ENCODE measurements at regions of chr1 and their contacts with region 1.

Region 1: GRCh38 chr1:219324629-219325367 is 151.1 kb downstream of the LYPLAL1 start:
- DNase-seq: no peak
- H3K4me3 Mint-ChIP-seq: no peak overlapping the region
- H3K27ac Mint-ChIP-seq: no peak overlapping the region
- H3K4me1 Mint-ChIP-seq: peaks cover 10% of the 10 kb centered on the region
- H3K27me3 Mint-ChIP-seq: peaks cover 38% of the 10 kb centered on the region

Region 2: GRCh38 chr1:219189021-219189824 is 135.6 kb before region 1 on chr1:
- intact Hi-C with region 1: loop called (anchors 1 kb)
- DNase-seq: no peak
- H3K4me3 Mint-ChIP-seq: no peak overlapping the region
- H3K27ac Mint-ChIP-seq: no peak overlapping the region
- H3K4me1 Mint-ChIP-seq: peaks cover 21% of the 10 kb centered on the region
- H3K27me3 Mint-ChIP-seq: no peaks in the 10 kb centered on the region

Region 3: DNA sequence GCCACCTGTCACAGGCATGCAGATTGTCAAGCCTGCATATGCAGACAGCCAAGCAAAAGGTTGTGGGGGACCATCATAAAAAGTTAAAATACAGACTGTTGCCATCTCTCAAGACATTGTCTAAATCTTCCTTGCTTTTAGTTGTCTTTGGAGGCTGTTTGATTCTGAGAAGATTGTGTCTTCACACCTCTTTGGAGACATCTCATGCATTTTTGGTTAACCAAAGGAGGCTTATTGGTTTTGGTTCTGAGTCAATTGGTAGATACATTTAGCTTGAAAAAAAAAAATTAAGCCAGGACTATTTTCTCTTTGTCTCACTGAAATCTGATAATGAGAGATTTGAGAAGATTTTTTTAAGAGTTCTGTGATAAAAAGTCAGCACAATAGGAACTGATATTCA is 66.5 kb after region 1 on chr1:
- intact Hi-C with region 1: loop called (anchors 2 kb)
- DNase-seq: no peak
- H3K4me3 Mint-ChIP-seq: no peak overlapping the region
- H3K27ac Mint-ChIP-seq: no peak overlapping the region
- H3K4me1 Mint-ChIP-seq: peaks cover 9% of the 10 kb centered on the region
- H3K27me3 Mint-ChIP-seq: peaks cover 34% of the 10 kb centered on the region

Region 4: DNA sequence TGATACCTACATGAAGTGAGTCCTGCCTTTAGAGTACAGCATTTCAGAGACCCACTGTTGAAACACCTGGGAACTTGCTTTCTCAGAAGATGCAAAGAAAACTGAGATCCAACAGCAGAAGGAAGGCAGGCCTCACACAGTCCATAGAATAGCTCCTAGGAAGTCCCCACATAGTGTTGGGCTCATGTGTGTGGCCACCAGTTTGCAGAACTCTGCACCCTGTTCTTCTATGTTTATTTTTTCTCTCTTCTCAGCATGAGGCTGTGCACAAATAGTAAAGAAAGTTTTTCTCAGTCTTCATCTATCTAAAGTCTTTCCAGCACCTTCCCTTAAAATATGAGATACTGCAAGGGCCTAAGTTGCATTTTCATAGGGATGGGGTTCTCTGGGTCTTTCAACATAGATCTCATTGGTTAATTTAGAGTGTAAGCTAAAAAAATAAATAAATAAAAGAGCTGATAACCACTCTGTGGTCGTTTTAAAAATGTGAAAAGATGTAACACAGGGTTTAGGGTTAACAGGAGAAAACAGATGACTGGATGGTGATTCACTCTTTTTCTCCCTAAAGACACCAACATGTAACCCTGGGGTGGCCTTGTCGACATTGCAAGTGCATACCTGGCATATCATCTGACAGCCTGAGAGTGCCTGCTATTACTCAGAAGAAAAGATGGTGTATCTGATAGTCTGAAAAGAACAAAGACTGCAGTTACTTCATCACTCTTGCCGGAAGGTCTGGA is 193.5 kb after region 1 on chr1:
- intact Hi-C with region 1: loop called (anchors 10 kb)
- DNase-seq: peak; percentile 9
- H3K4me3 Mint-ChIP-seq: no peak overlapping the region
- H3K27ac Mint-ChIP-seq: no peak overlapping the region
- H3K4me1 Mint-ChIP-seq: peaks cover 9% of the 10 kb centered on the region
- H3K27me3 Mint-ChIP-seq: no peaks in the 10 kb centered on the region